ENCODE measurements at regions of chr10 and their contacts with region 1.

Region 1: GRCh38 chr10:8416192-8416701 is 361.8 kb downstream of the GATA3 start:
- DNase-seq: peak in 1 of 2 experiments; percentile 27
- H3K4me3 ChIP-seq: no peak overlapping the region
- H3K4me3 Mint-ChIP-seq: no peak overlapping the region
- H3K27ac Mint-ChIP-seq: peak overlapping the region; percentile 57
- H3K4me1 ChIP-seq: peaks cover 48% of the 10 kb centered on the region
- H3K4me1 Mint-ChIP-seq: peaks cover 58% of the 10 kb centered on the region
- H3K27me3 ChIP-seq: no peaks in the 10 kb centered on the region
- H3K27me3 Mint-ChIP-seq: no peaks in the 10 kb centered on the region
- CTCF ChIP-seq: no peak

Region 2: GRCh38 chr10:8392216-8392615 is 24.0 kb before region 1 on chr10:
- CTCF ChIA-PET with region 1: no interaction called
- POLR2A ChIA-PET with region 1: no interaction called
- intact Hi-C with region 1: no loop called
- DNase-seq: no peak
- H3K4me3 ChIP-seq: no peak overlapping the region
- H3K4me3 Mint-ChIP-seq: no peak overlapping the region
- H3K27ac Mint-ChIP-seq: no peak overlapping the region
- H3K4me1 ChIP-seq: 0 out of 2 replicates have a peak, but pooled peaks cover 7% of the 10 kb centered on the region
- H3K4me1 Mint-ChIP-seq: peaks cover 6% of the 10 kb centered on the region
- H3K27me3 ChIP-seq: no peaks in the 10 kb centered on the region
- H3K27me3 Mint-ChIP-seq: no peaks in the 10 kb centered on the region
- CTCF ChIP-seq: no peak

Region 3: DNA sequence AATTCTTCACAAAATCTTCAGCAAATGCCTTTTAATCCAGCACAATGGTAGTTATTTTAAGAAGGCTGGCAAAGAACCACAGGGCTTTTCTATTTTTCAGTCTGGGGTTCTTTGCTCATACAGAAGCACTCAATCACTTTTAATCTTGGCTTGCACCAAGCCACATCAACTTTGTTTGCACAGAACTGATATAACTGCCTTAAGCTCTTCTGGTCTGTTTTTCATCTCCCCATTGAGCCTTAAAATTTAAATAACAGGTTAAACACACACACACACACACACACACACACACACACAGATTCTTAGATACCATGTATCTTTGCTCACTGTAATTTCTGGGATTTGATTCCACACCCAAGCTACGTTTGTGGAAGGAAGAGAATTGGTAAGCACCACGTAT is 15.3 kb after region 1 on chr10:
- CTCF ChIA-PET with region 1: no interaction called
- POLR2A ChIA-PET with region 1: no interaction called
- intact Hi-C with region 1: loop called (anchors 1 kb)
- DNase-seq: peak in 1 of 2 experiments; percentile 51
- H3K4me3 ChIP-seq: no peak overlapping the region
- H3K4me3 Mint-ChIP-seq: no peak overlapping the region
- H3K27ac Mint-ChIP-seq: no peak overlapping the region
- H3K4me1 ChIP-seq: peaks cover 20% of the 10 kb centered on the region
- H3K4me1 Mint-ChIP-seq: peaks cover 16% of the 10 kb centered on the region
- H3K27me3 ChIP-seq: no peaks in the 10 kb centered on the region
- H3K27me3 Mint-ChIP-seq: no peaks in the 10 kb centered on the region
- CTCF ChIP-seq: no peak

Measured in Caco-2 (cell line).